ENCODE measurements at regions of chr21 and their contacts with region 1.

Region 1: GRCh38 chr21:44618504-44618903 is 6.6 kb downstream of the KRTAP10-8 start:
- DNase-seq: no peak
- H3K4me3 ChIP-seq: peak overlapping the region; percentile 5
- H3K4me3 Mint-ChIP-seq: peak overlapping the region; percentile 16 to 86 (median 73)
- H3K27ac ChIP-seq: peak overlapping the region; percentile 57
- H3K27ac Mint-ChIP-seq: peak overlapping the region; percentile 70 to 95 (median 91)
- H3K4me1 ChIP-seq: peaks cover 47% of the 10 kb centered on the region
- H3K4me1 Mint-ChIP-seq: peaks cover 44 to 62% (median 54%) of the 10 kb centered on the region in 3 donors
- H3K27me3 ChIP-seq: no peaks in the 10 kb centered on the region
- H3K27me3 Mint-ChIP-seq: peaks cover 0 to 2% of the 10 kb centered on the region in 2 donors

Region 2: GRCh38 chr21:44657635-44658540 is 39.4 kb after region 1 on chr21 and contains the start of gene KRTAP12-3:
- CTCF ChIA-PET with region 1: interaction called, 11 read pairs
- POLR2A ChIA-PET with region 1: interaction called, 23 read pairs
- DNase-seq: peak; percentile 48 to 91 (median 83)
- H3K4me3 ChIP-seq: peak within 1 kb of the TSS; percentile 49
- H3K4me3 Mint-ChIP-seq: peak within 1 kb of the TSS; percentile 37 to 85 (median 71)
- H3K27ac ChIP-seq: peak within 1 kb of the TSS; percentile 67
- H3K27ac Mint-ChIP-seq: peak within 1 kb of the TSS; percentile 91 to 99 (median 96)
- H3K4me1 ChIP-seq: peaks cover 68% of the 10 kb centered on the region
- H3K4me1 Mint-ChIP-seq: peaks cover 67 to 74% (median 72%) of the 10 kb centered on the region in 3 donors
- H3K27me3 ChIP-seq: no peaks in the 10 kb centered on the region
- H3K27me3 Mint-ChIP-seq: peaks cover 0 to 6% of the 10 kb centered on the region in 2 donors
- total RNA-seq, gene KRTAP12-3: not detected